ENCODE measurements at regions of chr14 and their contacts with region 1.

Region 1: DNA sequence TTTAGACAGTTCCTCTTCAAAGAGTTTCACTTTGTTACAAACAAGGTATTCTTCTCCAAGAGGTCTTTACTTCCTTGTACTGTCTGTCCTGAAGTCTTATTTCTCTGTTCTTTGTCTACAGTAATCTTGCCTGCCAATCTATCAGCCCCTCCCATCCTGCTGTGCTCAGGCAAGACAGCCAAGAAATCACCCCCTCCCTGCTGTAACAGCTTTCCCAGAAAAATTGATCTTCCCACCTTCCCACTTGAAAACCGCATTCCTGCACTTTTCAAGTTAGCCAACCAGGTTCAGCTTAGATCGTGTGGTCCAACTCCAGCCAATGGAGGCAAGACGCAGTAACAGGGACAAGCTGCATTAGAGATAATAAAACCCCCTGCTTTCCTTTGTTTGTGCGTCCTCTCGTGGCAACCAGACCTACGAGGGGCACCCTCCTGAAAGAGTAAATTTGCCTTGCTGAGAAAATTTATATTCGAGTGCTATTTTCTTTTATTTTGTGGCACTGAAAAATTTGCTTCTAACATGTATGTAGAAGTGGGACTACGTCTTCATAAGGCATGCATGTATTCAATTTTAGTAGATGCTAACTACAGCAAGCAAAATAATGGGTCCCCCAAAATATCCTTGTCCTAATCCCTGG is 46.5 kb upstream of the ESR2 start:
- DNase-seq: no peak
- H3K4me3 ChIP-seq: no peak overlapping the region
- H3K27ac ChIP-seq: no peak overlapping the region
- H3K4me1 ChIP-seq: peaks cover 13% of the 10 kb centered on the region
- H3K27me3 ChIP-seq: no peaks in the 10 kb centered on the region
- CTCF ChIP-seq: no peak

Region 2: DNA sequence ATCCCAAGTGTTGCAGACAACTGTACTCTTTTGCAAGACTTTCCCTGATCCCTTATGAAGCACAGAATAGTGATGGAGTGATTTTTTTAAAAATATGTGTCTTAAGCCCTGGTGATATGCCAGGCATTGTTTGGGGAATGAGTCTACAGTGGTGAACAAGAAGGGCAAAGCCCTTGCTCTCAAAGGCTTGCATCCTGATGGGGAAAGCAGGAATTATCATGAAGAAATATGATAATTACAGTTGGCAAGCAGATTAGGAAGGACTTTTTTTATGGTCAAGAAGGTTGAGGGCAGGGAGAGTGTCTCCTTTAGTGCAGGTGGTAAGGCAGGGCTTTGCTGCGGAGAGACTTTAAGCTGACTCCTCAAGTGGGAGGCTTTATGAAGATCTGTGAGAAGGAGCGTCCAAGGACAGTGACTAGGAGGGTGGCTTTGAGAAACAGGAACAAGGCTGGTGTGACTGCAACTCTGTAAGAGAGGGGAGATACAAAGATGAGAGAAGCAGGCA is 387.7 kb before region 1 on chr14:
- CTCF ChIA-PET with region 1: no interaction called
- dilution Hi-C with region 1: no loop called
- in situ Hi-C with region 1: no loop called
- intact Hi-C with region 1: no loop called
- DNase-seq: no peak
- H3K4me3 ChIP-seq: no peak overlapping the region
- H3K27ac ChIP-seq: no peak overlapping the region
- H3K4me1 ChIP-seq: no peaks in the 10 kb centered on the region
- H3K27me3 ChIP-seq: no peaks in the 10 kb centered on the region
- CTCF ChIP-seq: no peak

Region 3: DNA sequence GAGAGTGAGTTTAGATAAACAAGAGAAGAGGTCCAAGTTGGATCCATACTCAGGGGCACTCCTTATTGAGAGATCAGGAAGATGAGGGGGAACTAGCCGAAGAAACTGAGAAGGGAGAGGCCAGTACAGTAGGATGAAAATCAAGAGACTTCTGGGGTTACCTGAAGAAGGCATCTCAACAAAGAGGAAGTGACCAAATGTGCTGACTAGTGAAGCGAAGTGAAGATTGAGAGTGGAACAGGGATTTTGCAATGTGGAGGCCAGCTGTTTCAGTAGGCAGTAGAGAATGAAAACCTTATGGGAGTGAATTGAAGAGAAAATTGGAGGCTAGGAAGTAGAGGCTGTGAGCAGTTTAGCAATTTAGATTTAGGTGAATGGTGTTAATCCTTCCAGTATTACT is 334.9 kb before region 1 on chr14:
- CTCF ChIA-PET with region 1: no interaction called
- dilution Hi-C with region 1: no loop called
- in situ Hi-C with region 1: no loop called
- intact Hi-C with region 1: loop called (anchors 1 kb)
- DNase-seq: no peak
- H3K4me3 ChIP-seq: no peak overlapping the region
- H3K27ac ChIP-seq: no peak overlapping the region
- H3K4me1 ChIP-seq: no peaks in the 10 kb centered on the region
- H3K27me3 ChIP-seq: no peaks in the 10 kb centered on the region
- CTCF ChIP-seq: no peak

Region 4: GRCh38 chr14:64159588-64159987 is 181.1 kb before region 1 on chr14:
- CTCF ChIA-PET with region 1: no interaction called
- dilution Hi-C with region 1: no loop called
- in situ Hi-C with region 1: no loop called
- intact Hi-C with region 1: no loop called
- DNase-seq: no peak
- H3K4me3 ChIP-seq: no peak overlapping the region
- H3K27ac ChIP-seq: no peak overlapping the region
- H3K4me1 ChIP-seq: no peaks in the 10 kb centered on the region
- H3K27me3 ChIP-seq: no peaks in the 10 kb centered on the region
- CTCF ChIP-seq: no peak

Region 5: DNA sequence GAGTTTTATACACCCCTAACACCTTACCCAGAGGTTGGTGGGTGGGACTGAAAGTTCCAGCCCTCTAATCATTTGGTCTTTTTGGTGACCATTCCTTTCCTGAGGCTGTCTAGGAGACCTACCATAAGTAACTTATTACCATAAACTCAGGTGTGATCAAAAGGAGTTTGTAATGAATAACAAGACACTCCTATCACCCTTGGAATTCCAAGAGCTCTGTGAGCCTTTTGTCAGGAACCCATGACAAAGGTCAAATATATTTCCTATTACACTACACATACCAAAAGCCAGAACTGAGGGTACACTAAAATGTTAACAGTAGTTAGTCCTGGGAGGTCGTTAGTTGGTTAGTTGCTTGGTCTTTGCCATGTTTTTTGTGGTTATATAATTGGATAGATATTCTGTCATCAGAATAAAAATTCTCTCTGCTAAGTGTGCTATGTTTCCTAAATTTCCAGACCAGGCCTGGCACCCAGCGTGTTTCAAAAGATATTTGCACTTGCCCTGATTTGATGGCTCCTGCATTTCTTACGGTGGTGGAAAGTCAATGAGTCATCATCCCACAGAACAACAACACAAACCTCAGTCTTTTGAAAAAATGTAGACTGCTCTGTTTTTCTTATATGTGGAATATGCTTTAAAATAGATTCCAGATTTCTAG is 97.6 kb after region 1 on chr14:
- CTCF ChIA-PET with region 1: no interaction called
- dilution Hi-C with region 1: no loop called
- in situ Hi-C with region 1: no loop called
- intact Hi-C with region 1: loop called (anchors 10 kb)
- DNase-seq: peak; percentile 75
- H3K4me3 ChIP-seq: no peak overlapping the region
- H3K27ac ChIP-seq: peak overlapping the region; percentile 11
- H3K4me1 ChIP-seq: peaks cover 20% of the 10 kb centered on the region
- H3K27me3 ChIP-seq: no peaks in the 10 kb centered on the region
- CTCF ChIP-seq: no peak

Region 6: DNA sequence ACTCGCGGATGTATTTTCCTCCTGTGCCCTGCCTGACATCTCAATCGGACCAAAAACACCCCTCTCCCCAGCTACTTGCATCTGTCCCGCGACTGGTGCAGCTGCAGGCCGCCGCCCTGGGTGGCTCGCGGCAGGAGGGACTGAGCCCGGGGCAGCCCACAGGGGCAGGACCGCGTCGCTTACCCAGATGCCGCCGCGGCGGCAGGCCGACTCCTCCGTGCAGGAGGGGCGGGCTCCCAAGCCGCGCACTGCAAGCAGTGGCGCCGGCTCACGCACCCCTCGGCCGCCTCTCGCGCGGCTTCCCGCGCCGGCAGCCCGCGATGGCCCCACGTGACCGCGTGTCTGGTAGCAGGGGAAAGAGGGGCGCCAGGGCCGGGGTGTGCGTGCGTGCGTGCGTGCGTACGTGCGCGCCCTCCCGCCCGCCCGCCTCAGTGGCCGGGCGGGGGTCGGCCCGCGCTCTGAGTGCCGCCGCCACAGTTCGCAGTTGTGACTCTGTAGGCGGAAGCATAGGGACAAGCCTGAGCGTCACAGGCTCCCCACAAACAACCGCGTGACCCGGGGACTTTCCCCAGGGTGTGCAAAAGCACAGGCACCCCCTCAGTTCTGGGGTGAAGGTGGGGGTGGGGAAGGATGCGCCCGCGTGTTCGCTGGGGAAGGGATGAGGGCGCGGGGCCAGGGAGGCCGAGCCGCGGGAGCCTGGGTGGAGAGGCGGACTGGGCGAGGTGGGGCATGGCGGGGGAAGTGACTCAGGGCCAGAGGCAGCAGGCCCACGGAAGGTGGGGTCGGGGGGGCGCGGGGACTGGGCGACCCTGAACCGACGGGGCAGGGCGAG is 163.0 kb after region 1 on chr14 and contains the start of gene ZBTB25:
- CTCF ChIA-PET with region 1: no interaction called
- dilution Hi-C with region 1: no loop called
- in situ Hi-C with region 1: no loop called
- intact Hi-C with region 1: loop called (anchors 10 kb)
- DNase-seq: peak; percentile 89
- H3K4me3 ChIP-seq: peak within 1 kb of the TSS; percentile 78 to 89 (median 84)
- H3K27ac ChIP-seq: peak within 1 kb of the TSS; percentile 93
- H3K4me1 ChIP-seq: peaks cover 40% of the 10 kb centered on the region
- H3K27me3 ChIP-seq: no peaks in the 10 kb centered on the region
- CTCF ChIP-seq: no peak
- total RNA-seq, gene ZBTB25: 9.7 to 10.8 TPM

Region 7: DNA sequence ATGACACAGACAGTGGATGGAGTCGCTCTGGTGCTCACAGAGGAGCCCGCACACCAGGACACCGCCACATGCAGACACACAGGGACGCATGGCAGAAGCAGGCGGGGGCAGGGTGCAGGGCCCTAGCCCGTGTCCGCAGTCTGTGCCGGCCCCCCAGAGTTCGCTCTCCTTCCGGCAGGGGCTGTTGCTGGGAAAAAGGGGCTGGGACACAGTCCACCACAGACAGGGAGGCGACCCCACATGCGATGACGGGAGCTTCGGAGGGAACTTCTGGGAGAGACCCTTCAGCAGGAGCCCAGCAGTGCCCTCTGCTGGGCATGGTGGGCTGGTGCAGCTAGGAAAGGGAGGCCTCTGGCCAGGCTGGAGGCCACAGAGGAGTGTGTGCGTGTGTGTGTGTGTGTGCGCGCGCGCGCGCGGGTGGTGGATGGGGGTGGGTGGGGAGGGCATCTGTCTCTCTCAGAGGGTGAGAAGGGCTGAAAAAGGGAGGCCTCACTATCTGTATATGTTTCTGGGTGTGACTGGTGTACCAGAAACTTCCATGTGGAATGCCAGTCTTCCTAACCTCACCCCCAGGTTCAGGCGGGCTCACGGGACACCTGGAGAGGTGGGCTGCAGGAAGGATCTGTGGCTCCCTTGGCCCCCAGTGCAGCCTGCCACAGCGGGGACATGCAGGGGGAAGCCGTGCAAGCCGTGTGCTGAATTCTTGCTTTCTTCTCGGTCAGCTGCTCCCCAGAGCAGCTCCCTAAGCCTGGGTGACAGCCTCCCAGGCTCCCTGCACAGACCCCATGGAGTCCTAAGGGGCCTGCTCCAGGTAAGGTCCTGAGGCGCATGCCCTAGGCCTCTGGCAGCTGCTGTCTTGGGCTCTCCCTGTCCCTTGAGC is 424.2 kb after region 1 on chr14:
- CTCF ChIA-PET with region 1: no interaction called
- dilution Hi-C with region 1: no loop called
- in situ Hi-C with region 1: no loop called
- intact Hi-C with region 1: loop called (anchors 5 kb)
- DNase-seq: peak; percentile 61
- H3K4me3 ChIP-seq: no peak overlapping the region
- H3K27ac ChIP-seq: no peak overlapping the region
- H3K4me1 ChIP-seq: peaks cover 45% of the 10 kb centered on the region
- H3K27me3 ChIP-seq: no peaks in the 10 kb centered on the region
- CTCF ChIP-seq: peak; percentile 80 to 92

Measured in mammary epithelial cell (primary cell).